ENCODE measurements at regions of chr16 and their contacts with region 1.

Region 1: GRCh38 chr16:740764-741505 is at the start of gene CIAO3:
- DNase-seq: peak; percentile 91
- H3K4me3 Mint-ChIP-seq: peak within 1 kb of the TSS; percentile 81
- H3K27ac Mint-ChIP-seq: no peak within 1 kb of the TSS
- H3K4me1 Mint-ChIP-seq: peaks cover 13% of the 10 kb centered on the region
- H3K27me3 Mint-ChIP-seq: no peaks in the 10 kb centered on the region
- total RNA-seq, gene CIAO3: 32.7 to 34.3 TPM

Region 2: GRCh38 chr16:714558-715476 is 26.1 kb before region 1 on chr16 and contains the start of gene METRN:
- CTCF ChIA-PET with region 1: interaction called, 15 read pairs
- intact Hi-C with region 1: loop called (anchors 2 kb)
- DNase-seq: peak; percentile 87
- H3K4me3 Mint-ChIP-seq: peak within 1 kb of the TSS; percentile 53
- H3K27ac Mint-ChIP-seq: no peak within 1 kb of the TSS
- H3K4me1 Mint-ChIP-seq: peaks cover 10% of the 10 kb centered on the region
- H3K27me3 Mint-ChIP-seq: peaks cover 22% of the 10 kb centered on the region
- total RNA-seq, gene METRN: 8.2 to 11.0 TPM

Region 3: DNA sequence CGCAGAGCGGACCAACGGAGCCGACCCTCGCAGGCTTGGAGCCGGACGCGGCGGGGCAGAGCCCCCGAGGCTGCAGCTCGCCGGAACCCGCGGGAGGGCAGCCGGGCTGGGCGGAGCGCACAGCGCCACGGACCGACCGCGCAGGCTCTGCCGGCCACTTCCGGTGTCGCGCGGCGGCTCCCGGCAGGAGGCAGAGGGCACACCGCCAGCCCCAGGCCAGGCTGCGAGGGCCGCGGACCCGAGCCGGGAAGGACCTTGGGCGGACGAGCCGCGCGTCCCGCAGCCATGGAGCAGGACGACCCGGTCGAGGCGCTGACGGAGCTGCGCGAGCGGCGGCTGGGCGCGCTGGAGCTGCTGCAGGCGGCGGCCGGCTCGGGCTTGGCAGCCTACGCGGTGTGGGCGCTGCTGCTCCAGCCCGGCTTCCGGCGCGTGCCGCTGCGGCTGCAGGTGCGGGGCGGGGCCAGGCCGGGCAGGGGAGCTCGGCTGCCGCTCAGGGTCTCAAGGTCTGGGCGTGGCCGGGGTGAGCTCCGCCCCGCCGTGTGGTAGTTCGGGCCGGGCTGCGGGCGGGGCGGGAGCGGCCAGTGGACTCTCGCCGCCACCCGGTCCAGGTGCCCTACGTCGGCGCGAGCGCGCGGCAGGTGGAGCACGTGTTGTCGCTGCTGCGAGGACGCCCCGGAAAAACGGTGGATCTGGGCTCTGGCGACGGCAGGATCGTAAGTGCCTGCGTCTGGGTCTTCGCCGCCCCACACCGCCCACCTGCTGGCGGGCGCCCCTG is 19.8 kb before region 1 on chr16 and contains the start of gene ANTKMT:
- CTCF ChIA-PET with region 1: interaction called, 13 read pairs
- intact Hi-C with region 1: loop called (anchors 2 kb)
- DNase-seq: peak; percentile 76
- H3K4me3 Mint-ChIP-seq: peak within 1 kb of the TSS; percentile 82
- H3K27ac Mint-ChIP-seq: peak within 1 kb of the TSS; percentile 69
- H3K4me1 Mint-ChIP-seq: peaks cover 17% of the 10 kb centered on the region
- H3K27me3 Mint-ChIP-seq: no peaks in the 10 kb centered on the region
- total RNA-seq, gene ANTKMT: 21.5 to 24.3 TPM

Region 4: DNA sequence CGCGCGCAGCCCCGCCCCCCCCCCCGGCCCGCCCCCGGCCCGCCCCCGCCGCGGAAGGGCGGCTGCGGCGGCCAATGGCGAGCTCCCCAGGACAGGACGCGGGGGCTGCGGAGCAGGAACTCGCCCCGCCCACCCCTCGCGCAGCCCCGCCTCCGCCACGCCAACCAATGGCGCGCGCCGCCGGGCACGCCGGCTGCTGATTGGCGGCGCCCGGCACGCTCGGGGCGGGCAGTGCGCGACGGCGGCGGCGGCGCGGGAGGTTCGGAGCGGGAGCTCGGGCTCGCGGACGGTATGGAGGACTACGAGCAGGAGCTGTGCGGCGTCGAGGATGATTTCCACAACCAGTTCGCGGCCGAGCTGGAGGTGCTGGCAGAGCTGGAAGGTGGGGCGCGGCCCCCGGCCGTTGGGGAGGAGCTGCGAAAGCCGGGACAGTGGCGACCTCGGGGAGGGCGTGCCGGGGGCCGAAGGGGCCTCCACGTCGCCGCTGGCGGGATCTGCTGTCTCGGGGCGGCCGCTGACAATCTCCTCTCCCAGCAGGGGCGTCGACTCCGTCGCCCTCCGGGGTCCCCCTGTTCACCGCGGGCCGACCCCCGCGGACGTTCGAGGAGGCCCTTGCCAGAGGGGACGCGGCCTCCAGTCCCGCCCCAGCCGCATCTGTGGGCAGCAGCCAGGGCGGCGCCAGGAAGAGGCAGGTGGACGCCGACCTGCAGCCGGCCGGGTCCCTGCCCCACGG is 47.6 kb after region 1 on chr16 and contains the start of gene CHTF18:
- CTCF ChIA-PET with region 1: interaction called, 9 read pairs
- intact Hi-C with region 1: loop called (anchors 1 kb)
- DNase-seq: peak; percentile 94
- H3K4me3 Mint-ChIP-seq: peak within 1 kb of the TSS; percentile 83
- H3K27ac Mint-ChIP-seq: no peak within 1 kb of the TSS
- H3K4me1 Mint-ChIP-seq: peaks cover 13% of the 10 kb centered on the region
- H3K27me3 Mint-ChIP-seq: no peaks in the 10 kb centered on the region
- total RNA-seq, gene CHTF18: 126 to 127 TPM